ENCODE measurements at regions of chr4 and their contacts with region 1.

Region 1: GRCh38 chr4:44726262-44726871 is at the start of gene GNPDA2:
- DNase-seq: peak; percentile 77
- H3K4me3 Mint-ChIP-seq: peak within 1 kb of the TSS; percentile 88
- H3K27ac Mint-ChIP-seq: peak within 1 kb of the TSS; percentile 84
- H3K4me1 Mint-ChIP-seq: peaks cover 23% of the 10 kb centered on the region
- H3K27me3 Mint-ChIP-seq: peaks cover 3% of the 10 kb centered on the region
- total RNA-seq, gene GNPDA2: 16.4 and 18.9 TPM in 2 replicates

Region 2: GRCh38 chr4:44563496-44563895 is 162.9 kb before region 1 on chr4:
- intact Hi-C with region 1: no loop called
- DNase-seq: no peak
- H3K4me3 Mint-ChIP-seq: no peak overlapping the region
- H3K27ac Mint-ChIP-seq: no peak overlapping the region
- H3K4me1 Mint-ChIP-seq: no peaks in the 10 kb centered on the region
- H3K27me3 Mint-ChIP-seq: no peaks in the 10 kb centered on the region

Region 3: GRCh38 chr4:44629280-44629866 is 97.0 kb before region 1 on chr4:
- intact Hi-C with region 1: no loop called
- DNase-seq: peak; percentile 13
- H3K4me3 Mint-ChIP-seq: no peak overlapping the region
- H3K27ac Mint-ChIP-seq: no peak overlapping the region
- H3K4me1 Mint-ChIP-seq: no peaks in the 10 kb centered on the region
- H3K27me3 Mint-ChIP-seq: no peaks in the 10 kb centered on the region

Region 4: GRCh38 chr4:44678094-44679041 is 48.0 kb before region 1 on chr4 and contains the start of gene GUF1:
- intact Hi-C with region 1: loop called (anchors 1 kb)
- DNase-seq: peak; percentile 86
- H3K4me3 Mint-ChIP-seq: peak within 1 kb of the TSS; percentile 89
- H3K27ac Mint-ChIP-seq: peak within 1 kb of the TSS; percentile 93
- H3K4me1 Mint-ChIP-seq: peaks cover 29% of the 10 kb centered on the region
- H3K27me3 Mint-ChIP-seq: peaks cover 2% of the 10 kb centered on the region
- total RNA-seq, gene GUF1: 37.5 and 39.2 TPM in 2 replicates

Region 5: DNA sequence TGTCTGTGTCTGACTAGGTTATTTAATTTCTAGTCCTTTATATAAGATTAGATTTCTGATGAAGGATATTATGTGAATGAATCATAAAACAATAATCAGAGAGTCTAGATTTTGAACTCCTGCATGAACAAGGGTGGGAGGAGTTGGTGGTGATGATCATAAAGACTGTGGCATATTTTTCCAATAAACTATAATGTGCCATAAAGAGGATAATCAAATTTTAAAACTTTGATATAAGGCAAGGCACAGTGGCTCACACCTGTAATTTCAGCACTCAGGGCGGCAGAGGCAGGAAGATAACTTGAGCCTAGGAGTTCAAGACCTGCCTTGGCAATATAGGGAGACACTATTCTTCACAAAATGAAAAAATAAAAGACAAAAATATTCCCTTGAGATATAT is 924.2 kb after region 1 on chr4:
- intact Hi-C with region 1: no loop called
- DNase-seq: no peak
- H3K4me3 Mint-ChIP-seq: no peak overlapping the region
- H3K27ac Mint-ChIP-seq: no peak overlapping the region
- H3K4me1 Mint-ChIP-seq: no peaks in the 10 kb centered on the region
- H3K27me3 Mint-ChIP-seq: no peaks in the 10 kb centered on the region